AG04449 (cell line): ENCODE measurements at regions of chr17 and their contacts with region 1.

Region 1: GRCh38 chr17:77331301-77331864 is 190.6 kb downstream of the SEC14L1 start:
- DNase-seq: no peak
- H3K4me3 ChIP-seq: no peak overlapping the region
- CTCF ChIP-seq: peak; percentile 85

Region 2: DNA sequence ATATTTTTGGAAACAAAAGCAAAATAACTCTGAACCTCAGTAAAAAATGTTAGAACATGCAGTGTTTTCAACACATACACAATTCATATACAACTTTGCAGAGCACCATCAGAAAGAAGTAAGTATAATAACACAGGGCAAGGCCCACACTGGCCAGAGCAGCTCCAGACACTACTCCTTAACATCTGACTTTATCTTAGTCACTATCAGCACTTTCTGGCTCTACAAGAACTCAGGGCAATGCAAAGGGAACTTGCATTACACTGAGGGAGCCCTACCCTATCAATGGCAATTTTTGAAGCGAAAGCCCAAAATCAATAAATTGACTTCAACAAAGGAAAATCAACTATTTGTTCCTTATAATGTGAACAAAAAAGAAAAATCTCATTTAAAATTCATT is 1107.6 kb before region 1 on chr17:
- CTCF ChIA-PET with region 1: no interaction called
- POLR2A ChIA-PET with region 1: no interaction called
- DNase-seq: no peak
- H3K4me3 ChIP-seq: no peak overlapping the region
- CTCF ChIP-seq: no peak

Region 3: GRCh38 chr17:77200711-77201110 is 130.7 kb before region 1 on chr17:
- CTCF ChIA-PET with region 1: no interaction called
- POLR2A ChIA-PET with region 1: no interaction called
- DNase-seq: no peak
- H3K4me3 ChIP-seq: no peak overlapping the region
- CTCF ChIP-seq: no peak

Region 4: DNA sequence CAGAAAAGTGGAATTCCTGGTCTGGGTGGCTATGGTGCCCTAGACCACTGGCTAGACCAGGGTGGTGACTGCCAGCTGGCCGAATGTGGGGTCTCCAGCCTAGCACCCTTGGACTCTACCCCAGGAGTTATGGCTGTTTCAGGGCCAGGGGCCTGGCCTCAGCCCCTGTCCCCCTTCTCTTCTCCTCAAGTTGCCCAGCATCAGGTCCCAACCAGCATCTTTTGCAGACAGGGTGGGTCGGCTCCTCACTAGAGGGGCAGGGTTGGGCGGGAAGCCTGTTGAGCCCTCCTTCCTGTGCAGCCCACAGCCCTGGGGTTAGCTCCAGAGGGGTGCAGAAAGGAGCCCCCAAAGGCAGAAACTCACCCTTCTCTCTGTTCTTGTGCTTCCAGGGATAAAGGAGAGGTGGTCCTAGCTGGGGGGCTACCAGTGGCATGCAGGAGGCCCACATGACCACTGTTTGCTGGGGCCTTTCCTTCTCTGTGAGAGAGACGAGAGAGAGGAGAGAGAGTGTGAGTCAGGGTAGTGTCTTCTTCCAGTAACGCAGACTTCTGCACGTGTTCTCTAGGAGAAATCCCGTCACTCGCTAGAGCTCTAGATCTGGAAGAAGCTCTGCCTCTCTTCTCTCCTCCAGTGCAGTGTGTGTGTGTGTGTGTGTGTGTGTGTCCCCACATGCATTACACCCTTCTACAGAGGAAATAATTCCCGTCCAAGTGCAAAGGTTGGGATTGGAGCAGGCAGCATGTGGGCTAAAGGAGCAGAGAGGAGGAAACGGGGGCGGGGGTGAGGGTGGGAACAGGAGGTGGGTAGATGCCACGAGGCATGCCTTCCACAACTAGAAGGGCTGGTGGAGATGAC is 18.8 kb after region 1 on chr17:
- CTCF ChIA-PET with region 1: interaction called, 19 read pairs
- POLR2A ChIA-PET with region 1: no interaction called
- DNase-seq: no peak
- H3K4me3 ChIP-seq: no peak overlapping the region
- CTCF ChIP-seq: no peak

Region 5: GRCh38 chr17:77365584-77366186 is 34.3 kb after region 1 on chr17:
- CTCF ChIA-PET with region 1: interaction called, 12 read pairs
- POLR2A ChIA-PET with region 1: no interaction called
- DNase-seq: peak; percentile 63
- H3K4me3 ChIP-seq: no peak overlapping the region
- CTCF ChIP-seq: no peak

Region 6: GRCh38 chr17:77404812-77405581 is 73.6 kb after region 1 on chr17:
- CTCF ChIA-PET with region 1: interaction called, 25 read pairs
- POLR2A ChIA-PET with region 1: no interaction called
- DNase-seq: peak; percentile 33
- H3K4me3 ChIP-seq: no peak overlapping the region
- CTCF ChIP-seq: no peak

Region 7: GRCh38 chr17:77429919-77430752 is 98.8 kb after region 1 on chr17:
- CTCF ChIA-PET with region 1: interaction called, 86 read pairs
- POLR2A ChIA-PET with region 1: interaction called, 8 read pairs
- DNase-seq: peak; percentile 97
- H3K4me3 ChIP-seq: no peak overlapping the region
- CTCF ChIP-seq: peak; percentile 77

Region 8: GRCh38 chr17:77471984-77472461 is 140.6 kb after region 1 on chr17:
- CTCF ChIA-PET with region 1: interaction called, 21 read pairs
- POLR2A ChIA-PET with region 1: no interaction called
- DNase-seq: no peak
- H3K4me3 ChIP-seq: no peak overlapping the region
- CTCF ChIP-seq: no peak

Region 9: GRCh38 chr17:77494664-77495435 is 163.5 kb after region 1 on chr17:
- CTCF ChIA-PET with region 1: interaction called, 36 read pairs
- POLR2A ChIA-PET with region 1: no interaction called
- DNase-seq: no peak
- H3K4me3 ChIP-seq: no peak overlapping the region
- CTCF ChIP-seq: peak; percentile 87

Region 10: GRCh38 chr17:77690271-77691161 is 359.1 kb after region 1 on chr17:
- CTCF ChIA-PET with region 1: no interaction called
- POLR2A ChIA-PET with region 1: no interaction called
- DNase-seq: no peak
- H3K4me3 ChIP-seq: no peak overlapping the region
- CTCF ChIP-seq: no peak